ENCODE measurements at regions of chr4 and their contacts with region 1.

Region 1: GRCh38 chr4:3047464-3048286 is 26.7 kb downstream of the HTT-AS start:
- DNase-seq: peak; percentile 89
- ATAC-seq: peak; percentile 98
- H3K4me3 Mint-ChIP-seq: peak overlapping the region; percentile 51
- H3K27ac Mint-ChIP-seq: peak overlapping the region; percentile 69
- H3K4me1 Mint-ChIP-seq: peaks cover 31% of the 10 kb centered on the region
- H3K27me3 Mint-ChIP-seq: no peaks in the 10 kb centered on the region

Region 2: GRCh38 chr4:2177443-2178093 is 870.1 kb before region 1 on chr4:
- CTCF ChIA-PET with region 1: no interaction called
- POLR2A ChIA-PET with region 1: no interaction called
- intact Hi-C with region 1: no loop called
- DNase-seq: no peak
- ATAC-seq: no peak
- H3K4me3 Mint-ChIP-seq: no peak overlapping the region
- H3K27ac Mint-ChIP-seq: no peak overlapping the region
- H3K4me1 Mint-ChIP-seq: peaks cover 11% of the 10 kb centered on the region
- H3K27me3 Mint-ChIP-seq: no peaks in the 10 kb centered on the region

Region 3: GRCh38 chr4:3065551-3065950 is 17.9 kb after region 1 on chr4:
- CTCF ChIA-PET with region 1: interaction called, 3 read pairs
- POLR2A ChIA-PET with region 1: no interaction called
- intact Hi-C with region 1: loop called in 1 of 2 experiments (anchors 2 kb)
- DNase-seq: no peak
- ATAC-seq: no peak
- H3K4me3 Mint-ChIP-seq: no peak overlapping the region
- H3K27ac Mint-ChIP-seq: no peak overlapping the region
- H3K4me1 Mint-ChIP-seq: no peaks in the 10 kb centered on the region
- H3K27me3 Mint-ChIP-seq: no peaks in the 10 kb centered on the region

Region 4: DNA sequence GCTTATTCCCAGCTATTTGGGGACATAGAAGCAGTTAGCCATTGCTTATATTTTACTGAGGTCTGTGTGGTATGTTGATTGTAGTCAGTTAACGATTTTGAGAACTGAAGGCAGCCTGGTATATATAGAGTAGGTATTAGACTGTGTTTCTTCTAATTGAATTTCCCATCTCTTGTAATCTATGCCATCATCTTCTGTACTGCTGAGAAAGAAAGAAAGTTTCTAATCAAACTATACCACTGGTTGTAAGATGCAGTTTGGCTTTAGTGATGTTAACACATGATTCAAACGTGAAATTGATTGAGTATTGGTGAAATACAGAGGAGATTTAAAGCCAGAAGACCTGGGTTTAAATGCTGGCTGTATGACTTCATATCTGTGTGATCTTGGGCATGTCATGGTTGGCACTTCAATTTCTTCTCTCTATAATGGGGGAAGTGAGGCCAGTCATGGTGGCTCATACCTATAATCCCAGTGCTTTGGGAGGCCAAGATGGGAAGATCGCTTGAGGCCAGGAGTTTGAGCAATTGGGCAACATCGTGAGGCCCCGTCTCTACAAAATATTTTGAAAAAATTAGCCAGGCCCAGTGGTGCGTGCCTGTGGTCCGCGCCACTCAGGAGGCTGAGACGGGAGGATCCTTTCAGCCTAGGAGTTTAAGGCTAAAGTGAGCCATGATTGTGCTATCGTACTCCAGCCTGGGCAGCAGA is 38.4 kb after region 1 on chr4:
- CTCF ChIA-PET with region 1: interaction called, 3 read pairs
- POLR2A ChIA-PET with region 1: no interaction called
- intact Hi-C with region 1: loop called (anchors 1 to 5 kb)
- DNase-seq: no peak
- ATAC-seq: peak; percentile 50
- H3K4me3 Mint-ChIP-seq: peak overlapping the region; percentile 20
- H3K27ac Mint-ChIP-seq: peak overlapping the region; percentile 96
- H3K4me1 Mint-ChIP-seq: peaks cover 68% of the 10 kb centered on the region
- H3K27me3 Mint-ChIP-seq: no peaks in the 10 kb centered on the region

Region 5: DNA sequence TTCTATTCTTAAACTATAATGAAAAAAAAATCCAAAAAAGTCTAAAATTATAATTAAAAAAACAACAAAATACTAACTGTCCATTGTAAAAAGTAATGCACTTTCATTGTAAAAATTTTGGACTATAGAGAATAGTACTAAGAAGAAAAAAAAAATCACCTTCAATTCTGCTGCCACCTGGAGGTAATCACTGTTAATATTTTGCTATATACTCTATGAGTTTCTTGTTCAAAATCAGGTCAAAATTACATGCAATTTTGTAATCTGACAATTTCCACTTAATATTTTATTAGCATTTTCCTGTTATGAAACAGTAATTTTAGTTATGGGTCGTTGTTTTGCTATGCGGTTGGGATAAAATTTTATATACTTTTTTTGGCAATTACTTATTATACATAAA is 88.8 kb after region 1 on chr4:
- CTCF ChIA-PET with region 1: interaction called, 3 read pairs
- POLR2A ChIA-PET with region 1: no interaction called
- intact Hi-C with region 1: loop called in 1 of 2 experiments (anchors 1 kb)
- DNase-seq: no peak
- ATAC-seq: no peak
- H3K4me3 Mint-ChIP-seq: no peak overlapping the region
- H3K27ac Mint-ChIP-seq: no peak overlapping the region
- H3K4me1 Mint-ChIP-seq: no peaks in the 10 kb centered on the region
- H3K27me3 Mint-ChIP-seq: no peaks in the 10 kb centered on the region

Region 6: GRCh38 chr4:3292571-3293400 is 245.1 kb after region 1 on chr4 and contains the start of gene RGS12:
- CTCF ChIA-PET with region 1: no interaction called
- POLR2A ChIA-PET with region 1: no interaction called
- intact Hi-C with region 1: loop called in 1 of 2 experiments (anchors 1 kb)
- DNase-seq: peak; percentile 93
- ATAC-seq: peak; percentile 95
- H3K4me3 Mint-ChIP-seq: peak within 1 kb of the TSS; percentile 81
- H3K27ac Mint-ChIP-seq: peak within 1 kb of the TSS; percentile 64
- H3K4me1 Mint-ChIP-seq: peaks cover 11% of the 10 kb centered on the region
- H3K27me3 Mint-ChIP-seq: peaks cover 4% of the 10 kb centered on the region
- total RNA-seq, gene RGS12: 8.0 to 9.4 TPM

Region 7: GRCh38 chr4:3442959-3443749 is 395.5 kb after region 1 on chr4:
- CTCF ChIA-PET with region 1: no interaction called
- POLR2A ChIA-PET with region 1: no interaction called
- intact Hi-C with region 1: loop called in 1 of 2 experiments (anchors 5 kb)
- DNase-seq: peak; percentile 83
- ATAC-seq: peak; percentile 89
- H3K4me3 Mint-ChIP-seq: no peak overlapping the region
- H3K27ac Mint-ChIP-seq: no peak overlapping the region
- H3K4me1 Mint-ChIP-seq: no peaks in the 10 kb centered on the region
- H3K27me3 Mint-ChIP-seq: no peaks in the 10 kb centered on the region

Measured in activated CD4-positive, alpha-beta T cell treated with anti-CD3 and anti-CD28 coated beads for 36 hours (primary cell).